ENCODE measurements at regions of chr9 and their contacts with region 1.

Region 1: DNA sequence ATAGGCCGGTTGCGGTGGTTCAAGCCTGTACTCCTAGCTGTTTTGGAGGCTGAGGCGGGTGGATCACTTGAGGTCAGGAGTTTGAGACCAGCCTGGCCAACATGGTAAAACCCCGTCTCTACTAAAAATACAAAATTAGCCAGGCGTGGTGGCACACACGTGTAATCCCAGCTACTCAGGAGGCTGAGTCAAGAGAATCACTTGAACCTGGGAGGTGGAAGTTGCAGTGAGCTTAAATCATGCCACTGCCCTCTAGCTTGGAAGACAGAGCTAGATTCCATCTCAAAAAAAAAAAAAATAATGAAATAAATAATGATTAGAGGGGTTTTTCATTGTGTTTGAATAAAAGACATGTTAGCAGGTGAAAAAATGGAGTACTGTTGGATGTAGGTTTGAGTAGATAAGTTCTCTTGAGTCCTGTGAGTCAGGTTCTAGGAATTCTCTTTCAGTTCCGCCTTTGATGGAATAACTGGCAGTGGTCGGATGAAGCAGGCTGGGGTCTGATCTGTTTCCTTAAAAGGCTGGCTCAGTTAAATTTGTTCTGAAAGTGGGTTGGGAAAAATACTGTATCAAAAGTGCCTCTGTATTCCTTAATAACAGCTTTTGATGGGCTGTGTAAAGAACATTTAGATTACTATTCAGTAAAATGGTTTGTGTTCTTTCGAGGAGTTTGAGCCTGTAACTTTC is 73.2 kb downstream of the AOPEP start:
- H3K4me3 Mint-ChIP-seq: no peak overlapping the region
- H3K27ac Mint-ChIP-seq: no peak overlapping the region
- H3K4me1 Mint-ChIP-seq: peaks cover 12% of the 10 kb centered on the region
- H3K27me3 Mint-ChIP-seq: no peaks in the 10 kb centered on the region

Region 2: GRCh38 chr9:94821098-94821887 is 21.6 kb after region 1 on chr9:
- intact Hi-C with region 1: no loop called
- H3K4me3 Mint-ChIP-seq: no peak overlapping the region
- H3K27ac Mint-ChIP-seq: peak overlapping the region; percentile 7
- H3K4me1 Mint-ChIP-seq: peaks cover 7% of the 10 kb centered on the region
- H3K27me3 Mint-ChIP-seq: no peaks in the 10 kb centered on the region

Region 3: GRCh38 chr9:94853887-94854286 is 54.2 kb after region 1 on chr9:
- intact Hi-C with region 1: loop called (anchors 10 kb)
- H3K4me3 Mint-ChIP-seq: no peak overlapping the region
- H3K27ac Mint-ChIP-seq: no peak overlapping the region
- H3K4me1 Mint-ChIP-seq: no peaks in the 10 kb centered on the region
- H3K27me3 Mint-ChIP-seq: no peaks in the 10 kb centered on the region

Region 4: DNA sequence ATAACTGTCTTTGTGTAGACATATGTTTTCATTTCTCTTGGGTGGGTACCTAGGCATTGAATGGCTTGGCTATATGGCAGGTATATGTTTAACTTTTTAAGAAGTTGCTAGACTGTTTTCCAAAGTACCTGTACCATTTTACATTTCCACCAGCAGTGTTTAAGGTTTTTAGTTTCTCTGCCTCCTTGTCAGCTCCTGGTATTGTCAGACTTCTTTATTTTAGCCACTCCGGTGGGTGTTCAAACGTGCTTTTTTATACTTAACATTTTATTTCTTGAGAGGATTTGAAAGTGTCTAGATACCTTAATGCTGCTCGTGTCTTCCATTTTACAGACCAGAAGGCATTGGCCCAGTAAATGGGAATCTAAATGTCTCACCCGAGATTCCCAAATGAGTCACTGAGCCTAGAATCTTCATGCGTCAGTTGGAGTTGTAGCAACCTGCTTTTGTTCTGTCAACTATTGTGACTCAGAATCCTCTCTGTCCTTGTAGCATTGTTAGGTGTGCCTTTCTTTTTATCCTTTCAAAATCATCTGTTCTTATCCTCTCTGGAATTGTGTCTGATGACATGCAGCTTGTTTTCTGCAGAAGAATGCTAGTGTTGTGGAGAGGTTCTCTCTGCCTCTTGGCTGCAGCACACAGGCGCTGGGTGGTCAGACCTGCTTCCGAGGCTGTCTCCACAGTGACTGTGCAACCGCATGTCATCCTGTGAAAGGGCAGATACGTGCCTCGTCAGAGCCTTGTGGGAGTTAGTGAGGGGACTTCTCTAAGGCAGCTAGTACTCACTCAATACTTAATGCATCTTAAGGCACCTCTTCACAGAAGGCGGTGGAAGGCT is 218.6 kb after region 1 on chr9:
- intact Hi-C with region 1: no loop called
- H3K4me3 Mint-ChIP-seq: no peak overlapping the region
- H3K27ac Mint-ChIP-seq: no peak overlapping the region
- H3K4me1 Mint-ChIP-seq: no peaks in the 10 kb centered on the region
- H3K27me3 Mint-ChIP-seq: no peaks in the 10 kb centered on the region

Measured in dendritic cell treated with granulocyte-macrophage colony-stimulating factor and Interleukin-4, amounts not matched to agents 40 ng/mL and 50 ng/mL, for 4 days (primary cell).